Activated naive CD8-positive, alpha-beta T cell treated with anti-CD3 and anti-CD28 coated beads, Interleukin-2, amount 10 ng/mL, durations not matched to agents 7 days and 5 days (primary cell): ENCODE measurements at regions of chr11 and their contacts with region 1.

Region 1: DNA sequence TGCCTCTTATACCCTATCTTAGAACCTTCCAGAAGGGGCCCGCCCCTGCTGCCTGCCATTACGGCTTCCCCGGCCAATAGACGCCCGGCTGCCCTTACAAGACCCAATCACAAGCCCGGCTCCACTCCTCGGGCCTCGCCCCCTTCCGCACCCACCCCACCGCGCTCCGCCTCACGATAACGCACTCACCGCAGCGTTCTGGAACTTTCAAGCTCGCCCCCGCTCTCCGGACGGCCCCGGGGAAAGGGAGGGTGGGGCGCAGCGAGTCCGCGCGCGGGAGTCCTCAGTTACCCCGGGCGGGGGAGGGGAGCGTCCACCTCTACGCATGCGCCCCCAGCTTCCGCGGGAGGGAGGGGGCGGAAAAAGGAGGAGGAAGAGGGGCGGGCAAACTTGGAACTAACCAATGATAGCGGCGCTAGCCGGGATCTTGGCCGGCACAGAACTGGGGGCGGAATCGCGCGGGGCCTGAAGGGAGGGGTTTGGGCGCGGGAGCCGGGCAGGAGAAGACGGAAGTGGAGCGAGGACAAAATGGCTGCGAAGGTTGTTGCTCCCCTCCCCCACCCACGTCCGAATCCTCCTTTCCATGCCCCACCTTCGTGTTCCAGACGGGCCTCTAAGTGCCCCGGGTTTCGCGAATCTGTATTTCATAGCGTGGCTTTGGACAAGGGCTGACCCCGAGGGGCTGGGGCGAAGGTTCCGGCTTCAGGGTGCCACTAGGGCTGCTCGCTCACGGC is 389 bp upstream of the HSPA8 start:
- DNase-seq: peak; percentile 99
- ATAC-seq: peak; percentile 86
- H3K4me3 Mint-ChIP-seq: peak overlapping the region; percentile 98
- H3K27ac Mint-ChIP-seq: peak overlapping the region; percentile 100
- H3K4me1 Mint-ChIP-seq: peaks cover 47% of the 10 kb centered on the region
- H3K27me3 Mint-ChIP-seq: no peaks in the 10 kb centered on the region

Region 2: GRCh38 chr11:122837528-122838346 is 224.6 kb before region 1 on chr11:
- POLR2A ChIA-PET with region 1: interaction called, 20 read pairs
- DNase-seq: no peak
- ATAC-seq: no peak
- H3K4me3 Mint-ChIP-seq: peak overlapping the region; percentile 83
- H3K27ac Mint-ChIP-seq: peak overlapping the region; percentile 88
- H3K4me1 Mint-ChIP-seq: peaks cover 30% of the 10 kb centered on the region
- H3K27me3 Mint-ChIP-seq: peaks cover 3% of the 10 kb centered on the region

Region 3: DNA sequence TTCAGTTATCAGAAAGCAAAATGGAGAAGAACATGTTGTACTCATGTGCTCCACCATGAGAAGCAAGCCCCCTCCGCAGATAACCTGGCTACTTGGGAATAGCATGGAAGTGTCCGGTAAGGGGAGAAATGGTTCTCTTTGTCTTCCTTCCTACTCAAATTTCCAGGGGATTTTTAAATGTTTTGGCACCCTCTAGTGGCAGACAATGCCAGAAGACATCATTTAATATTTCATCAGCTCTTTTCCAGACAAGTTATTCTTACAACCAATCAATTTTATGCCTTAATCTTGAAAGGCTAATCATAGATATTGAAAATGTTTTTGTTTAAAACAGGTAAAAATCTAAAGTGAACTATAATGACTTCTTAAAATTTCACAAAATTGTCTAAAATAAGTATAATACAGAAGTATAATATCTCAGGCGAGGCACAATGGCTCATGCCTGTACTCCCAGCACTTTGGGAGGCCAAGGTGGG is 208.3 kb before region 1 on chr11:
- POLR2A ChIA-PET with region 1: interaction called, 12 read pairs
- DNase-seq: no peak
- ATAC-seq: no peak
- H3K4me3 Mint-ChIP-seq: no peak overlapping the region
- H3K27ac Mint-ChIP-seq: no peak overlapping the region
- H3K4me1 Mint-ChIP-seq: peaks cover 44% of the 10 kb centered on the region
- H3K27me3 Mint-ChIP-seq: no peaks in the 10 kb centered on the region

Region 4: DNA sequence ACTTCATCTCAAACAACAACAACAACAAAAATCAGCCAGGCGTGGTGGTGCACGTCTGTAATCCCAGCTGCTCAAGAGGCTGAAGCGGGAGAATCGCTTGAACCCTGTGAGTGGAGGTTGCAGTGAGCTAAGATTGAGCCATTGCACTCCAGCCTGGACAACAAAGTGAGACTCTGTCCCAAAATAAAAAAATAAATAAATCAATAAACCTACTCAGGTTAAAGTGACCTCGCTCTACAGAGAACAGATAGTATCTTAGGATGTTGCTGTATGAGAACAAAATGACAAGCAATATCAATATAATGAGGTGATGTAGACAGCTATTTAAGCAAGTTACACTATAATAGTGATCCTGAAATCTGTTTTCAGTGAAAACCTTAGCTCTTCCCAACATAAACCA is 34.0 kb after region 1 on chr11:
- POLR2A ChIA-PET with region 1: interaction called, 178 read pairs
- DNase-seq: no peak
- ATAC-seq: no peak
- H3K4me3 Mint-ChIP-seq: no peak overlapping the region
- H3K27ac Mint-ChIP-seq: no peak overlapping the region
- H3K4me1 Mint-ChIP-seq: peaks cover 9% of the 10 kb centered on the region
- H3K27me3 Mint-ChIP-seq: peaks cover 3% of the 10 kb centered on the region

Region 5: GRCh38 chr11:123233280-123233974 is 171.1 kb after region 1 on chr11:
- POLR2A ChIA-PET with region 1: interaction called, 13 read pairs
- DNase-seq: no peak
- ATAC-seq: peak; percentile 96
- H3K4me3 Mint-ChIP-seq: peak overlapping the region; percentile 59
- H3K27ac Mint-ChIP-seq: peak overlapping the region; percentile 95
- H3K4me1 Mint-ChIP-seq: peaks cover 29% of the 10 kb centered on the region
- H3K27me3 Mint-ChIP-seq: peaks cover 7% of the 10 kb centered on the region